ENCODE measurements at regions of chr10 and their contacts with region 1.

Region 1: DNA sequence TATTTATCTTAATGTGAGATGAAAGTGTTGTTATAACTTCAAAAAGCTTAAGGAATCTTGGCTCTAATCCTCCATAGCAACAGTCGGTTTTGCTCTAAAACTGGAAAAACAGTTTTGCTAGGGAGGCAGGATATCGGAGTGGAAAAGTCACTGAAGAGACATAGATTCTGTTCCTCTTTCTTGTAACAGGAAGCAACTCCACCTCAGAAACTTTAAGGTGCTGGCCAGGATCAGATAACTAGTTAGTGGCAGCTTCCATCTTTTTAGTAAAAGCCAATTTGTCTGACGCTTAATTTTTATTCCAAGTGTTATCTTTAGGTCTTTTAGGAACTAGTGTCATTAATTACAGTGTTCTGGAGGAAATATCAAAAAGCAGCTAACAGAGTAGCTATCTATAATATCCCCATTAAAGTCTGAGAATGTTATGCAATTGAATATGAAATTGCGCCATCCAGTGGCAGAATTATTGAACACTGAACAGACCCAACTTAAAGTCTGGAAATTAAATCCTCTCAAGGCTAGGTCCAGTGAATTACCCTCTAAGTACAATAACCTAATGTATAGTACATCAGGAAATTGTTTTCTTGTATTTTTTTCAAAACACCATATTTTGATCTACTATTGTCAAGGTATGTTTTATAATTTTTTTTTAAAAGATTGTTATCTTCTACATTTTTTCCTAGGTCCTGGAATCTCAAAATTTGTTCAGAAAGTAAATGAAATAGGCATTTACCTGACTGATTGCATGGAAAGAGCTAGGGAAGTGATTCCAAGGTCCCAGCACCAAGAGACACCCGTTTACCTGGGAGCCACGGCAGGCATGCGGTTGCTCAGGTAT is 65.9 kb upstream of the CC2D2B start:
- DNase-seq: peak; percentile 45
- H3K4me3 Mint-ChIP-seq: no peak overlapping the region
- H3K27ac Mint-ChIP-seq: peak overlapping the region; percentile 67
- H3K4me1 Mint-ChIP-seq: peaks cover 63% of the 10 kb centered on the region
- H3K27me3 Mint-ChIP-seq: no peaks in the 10 kb centered on the region

Region 2: DNA sequence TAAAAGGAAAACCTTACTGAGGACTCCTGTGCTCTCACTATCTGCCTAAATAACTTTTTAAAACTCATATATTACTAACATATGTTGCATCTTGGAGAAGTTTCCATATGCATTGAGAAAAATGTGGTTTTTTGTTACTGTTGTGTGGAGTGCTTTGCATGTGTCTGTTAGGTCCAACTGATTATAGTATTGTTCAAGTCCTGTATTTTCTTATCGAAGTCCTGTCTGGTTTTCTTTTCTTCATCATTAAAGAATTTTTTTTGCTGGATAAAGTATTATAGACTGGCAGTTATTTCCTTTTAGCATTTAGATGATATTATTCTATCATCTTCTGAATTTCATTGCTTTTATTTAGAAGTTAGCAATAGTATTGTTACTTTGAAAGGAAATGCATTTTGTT is 707.4 kb before region 1 on chr10:
- CTCF ChIA-PET with region 1: no interaction called
- POLR2A ChIA-PET with region 1: no interaction called
- DNase-seq: no peak
- H3K4me3 Mint-ChIP-seq: no peak overlapping the region
- H3K27ac Mint-ChIP-seq: no peak overlapping the region
- H3K4me1 Mint-ChIP-seq: no peaks in the 10 kb centered on the region
- H3K27me3 Mint-ChIP-seq: no peaks in the 10 kb centered on the region

Region 3: DNA sequence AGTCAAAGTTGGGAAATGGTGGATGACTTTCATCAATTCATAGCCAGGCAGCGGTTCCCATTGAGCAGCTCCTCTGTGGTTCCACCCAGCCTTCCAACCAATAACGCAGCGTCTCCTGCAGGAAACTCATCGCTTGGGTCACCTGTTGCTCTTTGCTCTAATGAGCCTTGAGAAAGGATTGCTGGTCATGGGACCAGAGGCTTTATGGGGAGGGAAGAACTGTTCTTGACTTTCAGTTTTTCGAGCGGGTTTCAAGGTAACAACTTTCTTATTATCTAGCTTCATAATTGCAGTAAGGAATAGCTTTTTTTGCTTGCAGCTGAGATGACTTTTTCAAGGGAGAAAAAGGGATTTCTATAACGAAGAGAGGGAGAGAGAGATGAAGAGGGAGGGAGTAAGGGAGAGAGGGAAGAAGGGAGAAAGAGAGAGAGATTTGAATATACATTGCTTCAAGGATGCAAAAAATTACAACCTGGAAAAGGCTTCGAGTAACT is 86.3 kb before region 1 on chr10:
- CTCF ChIA-PET with region 1: interaction called, 10 read pairs
- POLR2A ChIA-PET with region 1: interaction called, 12 read pairs
- DNase-seq: no peak
- H3K4me3 Mint-ChIP-seq: peak overlapping the region; percentile 76
- H3K27ac Mint-ChIP-seq: peak overlapping the region; percentile 54
- H3K4me1 Mint-ChIP-seq: peaks cover 42% of the 10 kb centered on the region
- H3K27me3 Mint-ChIP-seq: peaks cover 14% of the 10 kb centered on the region

Region 4: GRCh38 chr10:95864906-95865813 is 23.3 kb after region 1 on chr10:
- CTCF ChIA-PET with region 1: interaction called, 50 read pairs
- POLR2A ChIA-PET with region 1: interaction called, 7 read pairs
- DNase-seq: peak; percentile 62
- H3K4me3 Mint-ChIP-seq: no peak overlapping the region
- H3K27ac Mint-ChIP-seq: peak overlapping the region; percentile 69
- H3K4me1 Mint-ChIP-seq: peaks cover 55% of the 10 kb centered on the region
- H3K27me3 Mint-ChIP-seq: no peaks in the 10 kb centered on the region

Region 5: GRCh38 chr10:95873651-95874050 is 31.8 kb after region 1 on chr10:
- CTCF ChIA-PET with region 1: interaction called, 14 read pairs
- POLR2A ChIA-PET with region 1: no interaction called
- DNase-seq: no peak
- H3K4me3 Mint-ChIP-seq: no peak overlapping the region
- H3K27ac Mint-ChIP-seq: no peak overlapping the region
- H3K4me1 Mint-ChIP-seq: peaks cover 5% of the 10 kb centered on the region
- H3K27me3 Mint-ChIP-seq: no peaks in the 10 kb centered on the region

Measured in activated CD4-positive, alpha-beta memory T cell treated with anti-CD3 and anti-CD28 coated beads, Interleukin-2, amount 10 ng/mL, durations not matched to agents 7 days and 5 days (primary cell).